AG04450 (cell line): ENCODE measurements at regions of chr13 and their contacts with region 1.

Region 1: DNA sequence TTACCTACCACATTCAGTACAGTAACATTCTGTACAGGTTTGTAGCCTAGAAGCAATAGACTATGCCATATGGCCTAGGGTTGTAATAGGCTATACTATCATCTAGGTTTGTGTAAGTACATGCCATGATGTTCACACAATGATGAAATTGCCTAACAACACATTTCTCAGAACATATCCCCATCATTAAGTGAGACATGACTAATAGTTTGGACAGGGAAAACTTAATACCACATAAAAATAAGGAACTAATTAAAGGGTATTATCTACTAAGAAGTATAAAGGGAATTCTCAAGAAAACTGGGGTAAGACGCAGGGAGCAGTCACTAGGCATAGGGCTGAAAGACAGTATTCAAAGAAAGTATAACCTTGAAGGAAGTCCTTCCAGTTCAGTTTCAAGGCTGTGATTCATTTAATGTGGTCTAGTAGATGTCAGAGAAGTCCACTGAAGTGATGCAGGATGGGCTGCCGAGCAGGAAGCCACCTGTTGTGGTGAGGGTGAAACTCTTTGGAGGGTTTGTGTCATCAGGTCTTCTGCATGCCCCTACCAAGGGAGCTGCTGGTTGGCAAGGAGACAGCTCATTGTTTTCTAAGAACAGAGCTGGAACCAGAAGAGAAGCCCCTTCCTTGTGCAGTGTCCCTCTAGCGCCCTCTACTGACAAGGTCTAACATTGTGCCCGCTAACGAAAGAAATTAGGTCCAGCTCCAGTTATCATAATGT is 122.9 kb downstream of the OLFM4 start:
- DNase-seq: no peak
- H3K4me3 ChIP-seq: no peak overlapping the region
- H3K27ac ChIP-seq: no peak overlapping the region
- H3K27me3 ChIP-seq: no peaks in the 10 kb centered on the region
- CTCF ChIP-seq: peak; percentile 77

Region 2: DNA sequence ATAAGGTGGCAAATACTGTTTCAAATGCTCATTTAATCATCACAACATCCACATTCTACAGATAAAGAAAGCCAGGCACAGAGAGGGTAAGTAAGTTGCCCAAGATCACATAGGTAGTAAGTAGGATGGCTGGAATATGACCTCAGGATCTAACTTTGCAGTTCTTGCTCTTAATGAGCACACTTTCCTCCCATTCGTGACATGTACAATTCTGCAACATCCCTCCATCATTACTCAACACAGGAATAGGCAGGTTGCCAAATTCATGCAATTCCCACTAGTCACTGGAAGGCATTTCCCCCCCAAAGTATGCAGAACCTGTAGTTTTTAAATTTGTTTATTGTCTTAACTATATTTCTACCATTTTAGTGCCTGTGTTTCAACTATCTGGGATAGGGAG is 13.7 kb before region 1 on chr13:
- CTCF ChIA-PET with region 1: interaction called, 14 read pairs
- POLR2A ChIA-PET with region 1: no interaction called
- DNase-seq: peak; percentile 66
- H3K4me3 ChIP-seq: no peak overlapping the region
- H3K27ac ChIP-seq: peak overlapping the region; percentile 81
- H3K27me3 ChIP-seq: no peaks in the 10 kb centered on the region
- CTCF ChIP-seq: no peak